ENCODE measurements at regions of chr17 and their contacts with region 1.

Region 1: GRCh38 chr17:49997791-49998703 is 3.0 kb upstream of the DLX3 start:
- DNase-seq: peak; percentile 94
- H3K4me3 Mint-ChIP-seq: peak overlapping the region; percentile 11
- H3K27ac Mint-ChIP-seq: no peak overlapping the region
- H3K4me1 Mint-ChIP-seq: peaks cover 24% of the 10 kb centered on the region
- H3K27me3 Mint-ChIP-seq: peaks cover 80% of the 10 kb centered on the region
- CTCF ChIP-seq: peak; percentile 93

Region 2: GRCh38 chr17:49567871-49568694 is 430.0 kb before region 1 on chr17:
- CTCF ChIA-PET with region 1: interaction called, 5 read pairs
- POLR2A ChIA-PET with region 1: no interaction called
- intact Hi-C with region 1: loop called (anchors 1 kb)
- DNase-seq: peak; percentile 79
- H3K4me3 Mint-ChIP-seq: peak overlapping the region; percentile 56
- H3K27ac Mint-ChIP-seq: no peak overlapping the region
- H3K4me1 Mint-ChIP-seq: peaks cover 20% of the 10 kb centered on the region
- H3K27me3 Mint-ChIP-seq: peaks cover 24% of the 10 kb centered on the region
- CTCF ChIP-seq: peak; percentile 95

Region 3: GRCh38 chr17:49850218-49850773 is 147.8 kb before region 1 on chr17:
- CTCF ChIA-PET with region 1: interaction called, 236 read pairs
- POLR2A ChIA-PET with region 1: no interaction called
- intact Hi-C with region 1: no loop called
- DNase-seq: no peak
- H3K4me3 Mint-ChIP-seq: peak overlapping the region; percentile 65
- H3K27ac Mint-ChIP-seq: peak overlapping the region; percentile 27
- H3K4me1 Mint-ChIP-seq: no peaks in the 10 kb centered on the region
- H3K27me3 Mint-ChIP-seq: peaks cover 36% of the 10 kb centered on the region
- CTCF ChIP-seq: no peak

Region 4: DNA sequence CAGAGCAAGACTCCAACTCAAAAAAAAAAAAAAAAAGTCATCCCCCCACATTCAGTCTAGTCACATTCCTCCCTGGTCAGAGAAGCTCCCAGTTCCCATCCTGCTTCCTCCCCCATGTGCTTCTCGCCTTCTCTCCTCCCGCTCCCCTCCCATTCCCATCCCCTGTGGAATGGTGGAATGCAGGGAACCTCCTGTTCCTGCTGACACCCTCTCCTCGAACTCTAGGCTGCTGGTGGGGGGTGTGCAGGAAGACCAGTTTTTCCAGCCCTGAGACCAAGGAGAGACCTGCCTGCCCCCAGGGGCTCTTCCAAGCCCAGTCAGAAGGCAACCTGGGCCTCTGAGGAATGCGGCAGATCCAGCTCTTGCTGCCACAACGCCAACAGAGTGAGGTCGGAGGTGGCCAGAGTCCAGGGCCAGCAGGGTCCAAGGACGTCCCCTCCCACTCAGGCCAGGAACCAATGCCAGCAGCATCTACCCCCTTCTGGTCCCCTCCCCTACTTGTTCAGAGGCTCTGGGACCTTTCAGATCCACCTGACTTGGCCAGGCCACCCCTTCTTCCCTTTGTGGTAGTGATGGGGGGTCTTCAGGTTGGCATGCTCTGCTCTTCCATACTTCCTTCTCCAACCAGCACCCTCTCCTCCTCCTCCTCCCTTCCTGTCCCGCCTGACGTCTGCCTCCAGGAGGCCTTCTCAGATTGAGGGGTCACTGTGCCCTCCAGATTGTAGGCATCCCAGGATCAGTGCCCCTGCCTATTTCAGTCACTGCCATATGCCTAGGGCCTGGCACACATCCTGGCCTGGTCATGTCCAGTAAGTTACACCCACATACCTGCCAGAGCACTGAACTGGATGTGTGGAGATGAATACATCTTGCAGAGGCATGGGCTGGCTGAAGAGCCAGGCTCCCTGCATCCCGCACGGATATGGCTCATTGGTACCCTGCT is 110.7 kb before region 1 on chr17:
- CTCF ChIA-PET with region 1: interaction called, 51 read pairs
- POLR2A ChIA-PET with region 1: interaction called, 4 read pairs
- intact Hi-C with region 1: no loop called
- DNase-seq: no peak
- H3K4me3 Mint-ChIP-seq: no peak overlapping the region
- H3K27ac Mint-ChIP-seq: peak overlapping the region; percentile 33
- H3K4me1 Mint-ChIP-seq: no peaks in the 10 kb centered on the region
- H3K27me3 Mint-ChIP-seq: peaks cover 54% of the 10 kb centered on the region
- CTCF ChIP-seq: no peak

Region 5: GRCh38 chr17:49939318-49939717 is 58.7 kb before region 1 on chr17:
- CTCF ChIA-PET with region 1: interaction called, 28 read pairs
- POLR2A ChIA-PET with region 1: interaction called, 4 read pairs
- intact Hi-C with region 1: no loop called
- DNase-seq: no peak
- H3K4me3 Mint-ChIP-seq: no peak overlapping the region
- H3K27ac Mint-ChIP-seq: no peak overlapping the region
- H3K4me1 Mint-ChIP-seq: no peaks in the 10 kb centered on the region
- H3K27me3 Mint-ChIP-seq: peaks cover 89% of the 10 kb centered on the region
- CTCF ChIP-seq: no peak

Region 6: GRCh38 chr17:49987681-49988441 is 10.2 kb before region 1 on chr17:
- CTCF ChIA-PET with region 1: interaction called, 71 read pairs
- POLR2A ChIA-PET with region 1: interaction called, 7 read pairs
- intact Hi-C with region 1: no loop called
- DNase-seq: peak; percentile 23
- H3K4me3 Mint-ChIP-seq: no peak overlapping the region
- H3K27ac Mint-ChIP-seq: no peak overlapping the region
- H3K4me1 Mint-ChIP-seq: peaks cover 17% of the 10 kb centered on the region
- H3K27me3 Mint-ChIP-seq: peaks cover 47% of the 10 kb centered on the region
- CTCF ChIP-seq: no peak

Region 7: GRCh38 chr17:50274142-50274896 is 276.3 kb after region 1 on chr17 and contains the start of gene TMEM92:
- CTCF ChIA-PET with region 1: no interaction called
- POLR2A ChIA-PET with region 1: no interaction called
- intact Hi-C with region 1: no loop called
- DNase-seq: peak; percentile 86
- H3K4me3 Mint-ChIP-seq: peak within 1 kb of the TSS; percentile 84
- H3K27ac Mint-ChIP-seq: no peak within 1 kb of the TSS
- H3K4me1 Mint-ChIP-seq: peaks cover 37% of the 10 kb centered on the region
- H3K27me3 Mint-ChIP-seq: no peaks in the 10 kb centered on the region
- CTCF ChIP-seq: no peak
- total RNA-seq, gene TMEM92: 1.1 and 1.5 TPM in 2 replicates

Measured in MCF 10A (cell line).